ENCODE measurements at regions of chr5 and their contacts with region 1.

Region 1: GRCh38 chr5:32489791-32490582 is 45.4 kb upstream of the ZFR start:
- DNase-seq: peak; percentile 73
- H3K4me3 Mint-ChIP-seq: no peak overlapping the region
- H3K27ac Mint-ChIP-seq: no peak overlapping the region
- H3K4me1 Mint-ChIP-seq: no peaks in the 10 kb centered on the region
- H3K27me3 Mint-ChIP-seq: no peaks in the 10 kb centered on the region

Region 2: GRCh38 chr5:32312647-32313523 is 177.1 kb before region 1 on chr5 and contains the start of gene MTMR12:
- CTCF ChIA-PET with region 1: no interaction called
- POLR2A ChIA-PET with region 1: no interaction called
- DNase-seq: peak; percentile 100
- H3K4me3 Mint-ChIP-seq: peak within 1 kb of the TSS; percentile 92
- H3K27ac Mint-ChIP-seq: peak within 1 kb of the TSS; percentile 86
- H3K4me1 Mint-ChIP-seq: peaks cover 40% of the 10 kb centered on the region
- H3K27me3 Mint-ChIP-seq: no peaks in the 10 kb centered on the region
- total RNA-seq, gene MTMR12: 28.6 to 29.6 TPM

Region 3: DNA sequence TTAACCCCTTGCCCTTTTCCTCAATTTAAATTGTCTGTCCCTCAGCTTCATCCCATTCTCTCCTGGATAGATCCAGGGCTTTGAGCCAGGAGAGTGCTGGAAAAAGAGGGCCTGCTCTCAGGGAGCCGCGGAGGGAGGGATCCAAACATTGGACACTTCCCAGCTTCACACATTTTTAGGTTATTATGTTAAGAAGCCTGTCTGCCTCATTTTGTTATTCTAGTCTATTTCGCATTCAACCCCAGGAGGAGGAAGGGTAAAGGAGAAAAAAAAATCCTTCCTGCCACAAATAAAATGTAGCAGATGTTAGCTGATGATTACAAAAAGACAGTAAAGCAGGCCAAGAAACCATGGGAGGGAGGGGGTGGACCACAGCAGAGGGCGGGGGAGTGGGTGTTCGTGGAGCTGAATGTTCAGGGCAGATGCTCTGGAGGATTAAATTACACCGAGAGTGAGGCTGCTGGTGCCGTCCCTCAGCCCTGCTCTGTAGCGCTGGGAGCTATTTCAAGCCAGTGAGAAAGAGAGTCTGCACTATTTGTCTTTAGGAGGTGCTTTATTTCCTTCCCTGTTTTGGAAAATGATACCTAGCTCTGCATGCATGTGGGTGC is 15.1 kb after region 1 on chr5:
- CTCF ChIA-PET with region 1: interaction called, 18 read pairs
- POLR2A ChIA-PET with region 1: interaction called, 3 read pairs
- DNase-seq: no peak
- H3K4me3 Mint-ChIP-seq: no peak overlapping the region
- H3K27ac Mint-ChIP-seq: no peak overlapping the region
- H3K4me1 Mint-ChIP-seq: peaks cover 4% of the 10 kb centered on the region
- H3K27me3 Mint-ChIP-seq: peaks cover 10% of the 10 kb centered on the region

Region 4: DNA sequence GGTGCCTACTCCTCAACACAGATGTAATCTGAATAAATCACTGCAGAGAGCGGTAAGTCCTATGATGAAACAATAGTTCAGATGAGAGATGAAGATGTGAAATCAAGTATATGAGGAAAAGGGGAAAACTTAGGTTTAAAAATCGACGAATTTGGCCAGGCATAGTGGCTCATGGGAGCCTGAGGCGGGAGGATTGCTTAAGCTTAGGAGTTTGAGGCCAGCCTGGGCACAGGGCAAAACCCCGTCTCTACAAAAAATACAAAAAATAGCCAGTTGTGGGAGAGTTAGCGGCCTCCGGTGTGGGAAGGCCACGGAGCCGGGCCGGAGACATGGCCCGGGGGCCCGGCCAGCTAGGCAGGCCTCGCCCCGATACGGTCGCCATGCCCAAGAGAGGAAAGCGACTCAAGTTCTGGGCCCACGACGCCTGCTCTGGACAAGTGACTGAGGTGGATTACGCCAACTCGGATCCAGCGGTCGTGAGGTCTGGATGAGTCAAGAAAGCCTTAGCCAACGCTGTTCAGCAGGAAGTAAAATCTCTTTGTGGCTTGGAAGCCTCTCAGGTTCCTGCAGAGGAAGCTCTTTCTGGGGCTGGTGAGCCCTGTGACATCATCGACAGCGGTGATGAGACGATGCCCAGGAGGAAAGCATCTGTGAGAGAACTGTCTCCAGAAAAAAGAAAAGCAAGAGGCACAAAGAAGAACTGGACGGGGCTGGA is 32.6 kb after region 1 on chr5:
- CTCF ChIA-PET with region 1: interaction called, 11 read pairs
- POLR2A ChIA-PET with region 1: no interaction called
- DNase-seq: peak; percentile 71
- H3K4me3 Mint-ChIP-seq: no peak overlapping the region
- H3K27ac Mint-ChIP-seq: peak overlapping the region; percentile 12
- H3K4me1 Mint-ChIP-seq: peaks cover 19% of the 10 kb centered on the region
- H3K27me3 Mint-ChIP-seq: peaks cover 9% of the 10 kb centered on the region

Region 5: DNA sequence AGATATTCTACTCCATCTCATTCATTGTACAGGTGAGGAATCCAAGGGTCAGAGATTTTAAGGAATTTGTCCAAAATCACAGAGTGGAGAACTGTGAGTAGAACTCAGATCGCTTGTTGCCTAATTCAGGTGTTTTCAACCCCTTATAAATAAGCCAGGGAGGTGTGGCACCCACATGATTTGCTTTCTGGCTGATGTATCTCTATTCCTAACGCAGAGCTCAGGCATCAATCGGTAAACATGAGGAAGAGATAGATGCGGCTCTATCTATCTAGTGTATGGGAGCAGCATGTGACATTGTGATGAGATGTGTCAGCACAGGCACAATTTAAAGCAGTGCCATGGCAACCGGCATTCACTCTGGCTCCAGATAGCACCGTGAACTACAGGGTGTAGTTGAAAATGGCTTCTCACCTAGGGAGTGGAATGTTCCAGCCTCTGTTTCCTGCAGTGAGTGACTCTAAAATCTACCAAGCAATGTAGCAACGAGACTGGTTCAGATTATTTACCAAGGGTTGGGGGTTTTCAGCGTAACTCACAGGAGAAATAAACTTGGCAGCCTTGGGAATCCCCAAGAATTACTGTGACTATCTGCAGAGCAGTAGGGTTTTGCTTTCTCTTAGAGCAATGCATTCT is 42.0 kb after region 1 on chr5:
- CTCF ChIA-PET with region 1: interaction called, 10 read pairs
- POLR2A ChIA-PET with region 1: interaction called, 4 read pairs
- DNase-seq: peak; percentile 73
- H3K4me3 Mint-ChIP-seq: peak overlapping the region; percentile 77
- H3K27ac Mint-ChIP-seq: peak overlapping the region; percentile 86
- H3K4me1 Mint-ChIP-seq: peaks cover 69% of the 10 kb centered on the region
- H3K27me3 Mint-ChIP-seq: no peaks in the 10 kb centered on the region

Region 6: GRCh38 chr5:32595118-32595517 is 105.1 kb after region 1 on chr5:
- CTCF ChIA-PET with region 1: interaction called, 318 read pairs
- POLR2A ChIA-PET with region 1: interaction called, 43 read pairs
- DNase-seq: peak; percentile 36
- H3K4me3 Mint-ChIP-seq: no peak overlapping the region
- H3K27ac Mint-ChIP-seq: peak overlapping the region; percentile 28
- H3K4me1 Mint-ChIP-seq: peaks cover 79% of the 10 kb centered on the region
- H3K27me3 Mint-ChIP-seq: no peaks in the 10 kb centered on the region

Region 7: GRCh38 chr5:32613050-32613672 is 123.2 kb after region 1 on chr5:
- CTCF ChIA-PET with region 1: interaction called, 36 read pairs
- POLR2A ChIA-PET with region 1: no interaction called
- DNase-seq: peak; percentile 86
- H3K4me3 Mint-ChIP-seq: no peak overlapping the region
- H3K27ac Mint-ChIP-seq: no peak overlapping the region
- H3K4me1 Mint-ChIP-seq: peaks cover 7% of the 10 kb centered on the region
- H3K27me3 Mint-ChIP-seq: no peaks in the 10 kb centered on the region

Measured in activated CD4-positive, alpha-beta memory T cell treated with anti-CD3 and anti-CD28 coated beads, Interleukin-2, amount 10 ng/mL, durations not matched to agents 7 days and 5 days (primary cell).